ENCODE measurements at regions of chr3 and their contacts with region 1.

Region 1: DNA sequence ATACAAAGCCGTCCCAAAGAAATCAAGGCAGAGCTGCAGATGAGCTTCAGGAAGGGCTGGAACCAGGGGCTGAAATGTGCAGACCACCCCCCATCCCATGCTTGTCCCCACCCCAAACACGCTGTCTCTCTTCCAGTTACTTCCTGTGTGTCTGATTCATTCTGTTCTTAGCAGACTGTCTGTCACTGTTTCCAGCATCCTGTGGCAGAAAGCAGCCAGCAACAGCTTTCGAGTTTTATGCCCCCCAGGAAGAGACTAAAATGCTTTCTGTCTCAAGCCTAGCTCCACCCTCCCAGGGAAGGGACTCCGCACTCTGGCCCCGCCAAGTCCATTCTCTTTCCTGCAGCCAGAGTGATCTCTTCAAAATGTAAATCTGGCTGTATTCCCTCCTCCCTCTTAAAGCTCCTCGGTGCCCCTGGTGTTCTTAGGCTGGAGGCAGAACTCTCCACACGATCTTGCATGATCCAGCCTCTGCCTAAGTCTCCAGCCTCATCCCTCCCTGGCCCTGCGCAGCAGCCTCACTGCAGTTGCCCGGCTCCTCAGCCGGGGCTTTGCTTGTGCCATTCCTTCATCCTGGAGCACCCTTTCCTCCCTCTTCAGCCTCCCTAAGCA is 41.5 kb downstream of the HRH1 start:
- DNase-seq: peak; percentile 36
- ATAC-seq: peak; percentile 43
- H3K4me3 ChIP-seq: peak overlapping the region; percentile 36; the same call in 1 of the 2 replicates
- H3K27ac ChIP-seq: peak overlapping the region; percentile 89
- H3K4me1 ChIP-seq: peaks cover 37% of the 10 kb centered on the region
- H3K27me3 ChIP-seq: no peaks in the 10 kb centered on the region
- CTCF ChIP-seq: no peak

Region 2: DNA sequence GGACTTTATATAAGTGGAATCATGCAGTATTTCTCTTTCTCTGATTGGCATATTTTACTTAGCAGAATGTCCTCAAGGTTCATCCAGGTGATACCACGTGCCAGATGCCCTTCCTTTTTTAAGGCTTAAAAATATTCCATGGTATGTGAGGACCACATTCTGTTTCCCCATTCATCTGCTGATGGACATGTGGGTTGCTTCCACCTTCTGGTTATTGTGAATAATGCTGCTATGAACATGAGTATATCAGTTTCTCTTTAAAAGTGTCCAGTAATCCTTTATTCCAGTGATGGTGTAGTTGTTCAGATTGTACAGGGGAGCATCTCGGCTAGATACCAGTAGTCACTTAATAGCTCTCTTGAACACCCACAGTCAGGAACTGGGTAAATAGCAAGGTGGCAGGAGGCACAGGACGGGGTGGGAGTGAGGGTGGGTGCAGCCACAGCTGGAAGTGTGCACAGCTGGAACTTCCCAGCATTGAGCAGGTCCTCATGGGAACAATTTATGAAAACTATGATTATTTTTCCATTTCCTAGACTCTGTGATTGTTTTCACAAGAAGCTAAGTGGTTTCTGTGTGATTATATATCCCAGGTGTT is 26.1 kb after region 1 on chr3:
- CTCF ChIA-PET with region 1: no interaction called
- POLR2A ChIA-PET with region 1: no interaction called
- intact Hi-C with region 1: loop called (anchors 1 kb)
- DNase-seq: peak; percentile 14
- ATAC-seq: no peak
- H3K4me3 ChIP-seq: no peak overlapping the region
- H3K27ac ChIP-seq: no peak overlapping the region
- H3K4me1 ChIP-seq: peaks cover 30% of the 10 kb centered on the region
- H3K27me3 ChIP-seq: no peaks in the 10 kb centered on the region
- CTCF ChIP-seq: peak; percentile 45